ENCODE measurements at regions of chr16 and their contacts with region 1.

Region 1: DNA sequence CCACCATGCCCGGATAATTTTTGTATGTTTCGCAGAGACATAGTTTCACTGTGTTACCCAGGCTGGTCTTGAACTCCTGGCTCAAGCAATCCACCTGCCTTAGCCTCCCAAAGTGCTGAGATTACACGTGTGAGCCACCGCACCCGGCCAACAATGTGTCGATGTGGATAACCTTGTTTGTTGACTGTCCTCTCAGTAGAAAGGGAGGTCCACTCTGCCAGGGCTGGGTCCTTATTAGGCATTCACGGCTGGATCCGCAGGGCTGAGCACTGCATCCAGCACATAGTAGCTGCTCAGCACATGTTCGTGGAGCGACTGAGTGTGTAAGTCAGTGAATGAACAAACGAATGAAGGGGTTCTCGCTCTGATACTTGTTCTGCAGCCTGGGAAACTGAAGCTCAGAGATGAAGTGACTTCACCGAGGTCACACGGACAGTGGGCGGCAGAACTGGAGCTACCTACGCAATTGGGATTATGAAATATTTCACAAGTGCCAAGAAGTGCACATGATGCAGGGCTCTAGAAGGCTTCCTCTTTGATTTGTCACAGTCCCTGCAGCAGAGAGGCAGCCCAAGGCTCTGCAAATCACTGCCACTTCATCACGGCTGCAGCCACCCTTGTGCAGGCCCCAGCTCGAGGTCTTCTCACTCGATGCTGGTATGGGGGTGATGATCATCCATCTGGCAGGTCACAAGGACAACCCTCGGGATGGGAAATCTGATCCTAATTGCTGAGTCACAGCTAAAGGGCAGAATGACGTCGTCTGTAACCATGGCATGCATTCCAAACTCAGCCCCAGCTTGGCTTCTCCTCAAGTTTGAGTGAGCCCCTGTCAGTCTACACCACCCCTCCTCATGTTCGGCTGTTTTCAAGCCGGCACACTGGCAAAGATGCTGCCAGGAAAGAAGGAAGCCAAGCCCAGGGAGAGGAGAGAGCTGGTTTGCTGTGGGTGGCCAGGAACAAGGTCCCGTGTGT is 28.0 kb upstream of the SNN start:
- ATAC-seq: peak; percentile 80 to 97 (median 94)
- H3K4me3 ChIP-seq: no peak overlapping the region
- H3K27ac ChIP-seq: peak overlapping the region in 1 of 2 donors; percentile 41
- H3K4me1 ChIP-seq: peaks cover 4 to 7% of the 10 kb centered on the region in 2 donors

Region 2: GRCh38 chr16:10114409-10114808 is 1525.8 kb before region 1 on chr16:
- in situ Hi-C with region 1: no loop called
- ATAC-seq: peak in 1 of 8 experiments; percentile 88
- H3K4me3 ChIP-seq: no peak overlapping the region
- H3K27ac ChIP-seq: no peak overlapping the region
- H3K4me1 ChIP-seq: peaks cover 9 to 10% of the 10 kb centered on the region in 2 donors

Region 3: GRCh38 chr16:11431915-11432465 is 208.2 kb before region 1 on chr16:
- in situ Hi-C with region 1: loop called in 1 of 9 experiments (anchors 25 kb)
- ATAC-seq: no peak
- H3K4me3 ChIP-seq: no peak overlapping the region
- H3K27ac ChIP-seq: no peak overlapping the region
- H3K4me1 ChIP-seq: peaks cover 12 to 16% of the 10 kb centered on the region in 2 donors

Measured in motor neuron (in vitro differentiated cells).